ENCODE measurements at regions of chr20 and their contacts with region 1.

Region 1: GRCh38 chr20:32031007-32031958 is 20.8 kb upstream of the HCK start:
- DNase-seq: peak; percentile 37 to 69 (median 40)
- H3K4me3 ChIP-seq: peak overlapping the region; percentile 8
- H3K4me3 Mint-ChIP-seq: peak overlapping the region in 4 of 7 donors; percentile 25 to 44 (median 32)
- H3K27ac ChIP-seq: no peak overlapping the region
- H3K27ac Mint-ChIP-seq: no peak overlapping the region
- H3K4me1 ChIP-seq: no peaks in the 10 kb centered on the region
- H3K4me1 Mint-ChIP-seq: peaks cover 0 to 4% (median 3%) of the 10 kb centered on the region in 3 donors
- H3K27me3 ChIP-seq: peaks cover 5% of the 10 kb centered on the region
- H3K27me3 Mint-ChIP-seq: peaks cover 8 to 56% of the 10 kb centered on the region in 2 donors

Region 2: DNA sequence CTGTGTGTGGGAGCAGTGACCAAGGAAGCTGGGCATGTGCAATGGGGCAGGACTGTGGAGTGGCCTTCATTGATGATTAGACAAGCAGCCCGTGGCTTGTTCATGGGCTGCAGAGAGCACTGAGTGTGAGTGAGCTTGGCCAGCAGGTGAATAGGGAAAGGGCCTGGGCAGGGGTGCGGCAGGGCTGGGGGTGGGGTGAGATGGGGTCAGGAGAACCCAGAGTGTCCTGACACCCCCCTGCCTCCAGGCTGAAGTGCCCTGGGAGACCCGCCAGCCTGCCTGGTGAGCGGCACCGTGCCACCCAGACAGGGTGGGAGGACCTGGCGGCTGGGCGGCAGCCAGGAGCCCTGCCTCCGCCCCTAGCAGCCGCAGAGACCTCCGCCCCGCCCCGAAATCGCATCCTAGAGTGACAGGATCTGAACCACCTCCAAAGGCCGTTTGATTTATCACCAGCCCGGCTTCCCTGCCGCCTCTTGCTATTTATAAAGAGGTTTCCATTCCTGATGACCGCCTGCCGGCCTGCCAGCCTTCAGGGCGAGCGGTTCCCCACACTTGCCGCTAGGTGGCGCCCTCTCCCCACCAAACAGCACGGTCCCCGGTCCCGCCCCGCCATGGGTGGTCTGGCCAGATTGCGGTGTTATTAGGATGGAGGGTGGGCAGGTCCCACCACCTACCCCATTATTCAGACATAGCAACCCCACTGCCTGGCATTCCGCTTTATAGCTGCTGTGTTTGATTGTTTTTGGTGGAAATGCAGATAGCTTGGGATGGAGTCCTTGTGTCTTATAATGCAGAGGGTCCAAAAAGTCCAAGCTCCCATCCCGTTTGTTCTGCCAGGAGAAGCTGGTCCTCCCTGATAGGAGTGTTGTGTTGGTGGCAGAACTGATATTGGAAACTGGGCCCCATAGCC is 208.6 kb before region 1 on chr20:
- CTCF ChIA-PET with region 1: interaction called, 24 read pairs
- POLR2A ChIA-PET with region 1: no interaction called
- DNase-seq: peak; percentile 62 to 78 (median 70)
- H3K4me3 ChIP-seq: no peak overlapping the region
- H3K4me3 Mint-ChIP-seq: peak overlapping the region in 3 of 7 donors; percentile 17 to 44 (median 32)
- H3K27ac ChIP-seq: no peak overlapping the region
- H3K27ac Mint-ChIP-seq: peak overlapping the region in 2 of 8 donors; percentile 8 to 55
- H3K4me1 ChIP-seq: no peaks in the 10 kb centered on the region
- H3K4me1 Mint-ChIP-seq: peaks cover 0 to 5% (median 5%) of the 10 kb centered on the region in 3 donors
- H3K27me3 ChIP-seq: no peaks in the 10 kb centered on the region
- H3K27me3 Mint-ChIP-seq: no peaks in the 10 kb centered on the region

Region 3: GRCh38 chr20:31845300-31845863 is 185.9 kb before region 1 on chr20 and contains the start of gene FOXS1:
- CTCF ChIA-PET with region 1: interaction called, 11 read pairs
- POLR2A ChIA-PET with region 1: no interaction called
- DNase-seq: no peak
- H3K4me3 ChIP-seq: no peak within 1 kb of the TSS
- H3K4me3 Mint-ChIP-seq: no peak within 1 kb of the TSS
- H3K27ac ChIP-seq: no peak within 1 kb of the TSS
- H3K27ac Mint-ChIP-seq: peak within 1 kb of the TSS in 1 of 8 donors; percentile 29
- H3K4me1 ChIP-seq: no peaks in the 10 kb centered on the region
- H3K4me1 Mint-ChIP-seq: no peaks in the 10 kb centered on the region
- H3K27me3 ChIP-seq: no peaks in the 10 kb centered on the region
- H3K27me3 Mint-ChIP-seq: peaks cover 7 to 18% of the 10 kb centered on the region in 2 donors
- total RNA-seq, gene FOXS1: not detected

Region 4: DNA sequence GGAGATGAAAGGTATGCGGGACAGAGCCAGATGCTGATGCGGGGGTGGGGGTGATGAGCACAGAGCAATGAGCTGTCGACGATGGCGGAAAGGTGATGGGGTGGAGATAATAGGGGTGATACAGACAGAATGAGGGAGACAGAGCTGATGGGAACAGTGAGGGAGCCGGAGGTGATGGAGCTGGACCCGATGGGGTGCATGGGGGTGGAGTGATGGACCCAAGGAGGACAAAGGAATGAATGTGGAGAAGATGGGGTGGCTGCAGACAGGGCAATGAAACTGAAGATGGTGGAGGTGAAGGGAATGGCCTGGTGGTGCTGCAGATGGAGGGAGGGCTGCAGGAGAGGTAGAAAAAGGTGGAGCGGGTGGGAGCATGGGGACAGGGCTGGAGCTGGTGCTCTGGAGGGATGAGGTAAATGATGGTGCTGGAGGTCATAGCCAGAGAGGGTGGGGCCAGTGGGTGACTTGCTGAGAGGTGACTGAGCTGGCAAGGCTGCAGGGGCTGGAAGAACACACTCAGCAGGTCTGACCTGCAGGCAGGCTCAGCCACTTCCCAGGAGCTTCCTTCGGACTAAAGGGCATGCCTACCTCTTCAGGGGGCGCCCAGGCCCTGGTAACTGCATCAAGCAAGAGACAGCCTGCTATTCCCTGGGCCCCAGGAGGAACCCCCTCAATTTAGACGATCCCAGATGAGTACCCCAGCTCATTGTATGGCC is 179.9 kb before region 1 on chr20:
- CTCF ChIA-PET with region 1: interaction called, 23 read pairs
- POLR2A ChIA-PET with region 1: no interaction called
- DNase-seq: no peak
- H3K4me3 ChIP-seq: no peak overlapping the region
- H3K4me3 Mint-ChIP-seq: no peak overlapping the region
- H3K27ac ChIP-seq: no peak overlapping the region
- H3K27ac Mint-ChIP-seq: no peak overlapping the region
- H3K4me1 ChIP-seq: no peaks in the 10 kb centered on the region
- H3K4me1 Mint-ChIP-seq: no peaks in the 10 kb centered on the region
- H3K27me3 ChIP-seq: peaks cover 14% of the 10 kb centered on the region
- H3K27me3 Mint-ChIP-seq: peaks cover 16 to 29% of the 10 kb centered on the region in 2 donors

Region 5: GRCh38 chr20:32336918-32337347 is 305.6 kb after region 1 on chr20:
- CTCF ChIA-PET with region 1: no interaction called
- POLR2A ChIA-PET with region 1: no interaction called
- DNase-seq: peak in 1 of 5 donors; percentile 39
- H3K4me3 ChIP-seq: no peak overlapping the region
- H3K4me3 Mint-ChIP-seq: no peak overlapping the region
- H3K27ac ChIP-seq: no peak overlapping the region
- H3K27ac Mint-ChIP-seq: peak overlapping the region in 3 of 8 donors; percentile 43 to 66 (median 57)
- H3K4me1 ChIP-seq: peaks cover 21% of the 10 kb centered on the region
- H3K4me1 Mint-ChIP-seq: peaks cover 28 to 35% (median 31%) of the 10 kb centered on the region in 3 donors
- H3K27me3 ChIP-seq: no peaks in the 10 kb centered on the region
- H3K27me3 Mint-ChIP-seq: no peaks in the 10 kb centered on the region

Measured in CD8-positive, alpha-beta memory T cell (primary cell).